ENCODE measurements at regions of chr5 and their contacts with region 1.

Region 1: DNA sequence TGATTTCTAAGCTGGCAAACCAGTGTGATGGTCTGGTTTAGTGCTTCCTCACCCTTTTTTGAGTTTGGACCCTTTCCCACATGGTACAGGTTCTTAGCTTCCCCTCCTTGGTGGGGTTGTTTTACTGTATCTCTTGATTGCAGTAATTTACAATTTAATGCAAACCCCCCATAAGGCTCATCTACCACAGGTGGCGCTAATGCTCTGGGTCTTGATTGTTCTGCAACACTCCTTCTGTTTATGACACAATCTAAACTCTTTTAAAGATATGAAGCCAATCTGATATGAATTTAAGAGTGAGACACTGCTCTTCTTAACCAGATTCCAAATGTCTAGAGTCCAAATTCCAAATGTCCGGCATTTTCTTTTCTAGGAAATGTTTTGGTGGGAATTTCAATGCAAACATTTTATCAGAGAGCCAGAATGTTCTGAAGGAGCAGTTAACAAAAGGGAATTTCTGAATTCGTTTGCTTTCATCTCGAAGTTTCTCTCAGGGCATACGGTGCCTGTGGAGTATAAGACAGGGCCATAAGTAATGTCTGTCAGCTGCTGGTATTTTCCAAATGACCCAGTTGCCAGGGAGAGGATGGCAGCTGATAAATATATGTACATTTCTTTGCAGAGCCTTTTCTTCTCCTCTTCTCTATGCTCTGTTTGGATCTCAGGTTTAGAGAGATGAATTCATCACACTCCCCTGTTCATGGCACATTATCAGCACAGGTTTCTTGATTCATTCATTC is 246.8 kb downstream of the ARHGAP26 start:
- DNase-seq: peak; percentile 85
- H3K4me3 Mint-ChIP-seq: no peak overlapping the region
- H3K27ac Mint-ChIP-seq: no peak overlapping the region
- H3K4me1 Mint-ChIP-seq: peaks cover under 1% of the 10 kb centered on the region
- H3K27me3 Mint-ChIP-seq: no peaks in the 10 kb centered on the region
- CTCF ChIP-seq: peak; percentile 83

Region 2: DNA sequence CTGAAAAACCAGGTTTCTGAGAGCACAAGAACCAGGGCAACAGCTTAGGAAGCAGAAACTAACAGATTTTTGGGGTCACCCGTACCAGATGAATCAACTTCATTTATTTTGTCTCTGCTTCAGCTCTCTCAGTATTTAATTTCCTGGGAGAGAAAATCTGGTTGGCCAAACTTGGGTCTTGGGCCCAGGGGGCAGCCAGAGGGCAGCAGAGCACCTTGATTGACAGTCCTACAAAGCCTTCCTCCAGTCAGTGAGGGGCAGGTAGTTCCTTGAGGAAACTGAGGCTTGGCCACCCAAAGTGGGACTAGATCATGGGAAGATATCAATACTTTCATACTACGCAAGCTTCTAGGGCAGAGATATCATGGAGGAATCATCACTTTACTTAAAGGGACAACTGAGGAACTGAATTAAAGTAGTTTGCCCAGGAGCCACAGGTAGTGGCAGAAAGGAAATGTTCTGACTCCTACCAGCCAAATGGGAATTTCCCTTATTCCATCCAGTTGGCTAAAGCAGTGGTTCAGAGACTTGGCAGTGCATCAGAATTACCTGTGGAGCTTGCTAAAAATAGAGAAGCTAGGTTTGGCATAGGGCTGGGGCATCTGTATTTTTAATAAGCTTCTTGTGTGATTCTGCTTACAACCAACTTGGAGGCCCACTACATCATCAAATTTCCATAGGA is 268.2 kb before region 1 on chr5:
- CTCF ChIA-PET with region 1: no interaction called
- POLR2A ChIA-PET with region 1: no interaction called
- intact Hi-C with region 1: no loop called
- DNase-seq: peak; percentile 84
- H3K4me3 Mint-ChIP-seq: no peak overlapping the region
- H3K27ac Mint-ChIP-seq: peak overlapping the region; percentile 20
- H3K4me1 Mint-ChIP-seq: peaks cover 44% of the 10 kb centered on the region
- H3K27me3 Mint-ChIP-seq: no peaks in the 10 kb centered on the region
- CTCF ChIP-seq: peak; percentile 87

Region 3: DNA sequence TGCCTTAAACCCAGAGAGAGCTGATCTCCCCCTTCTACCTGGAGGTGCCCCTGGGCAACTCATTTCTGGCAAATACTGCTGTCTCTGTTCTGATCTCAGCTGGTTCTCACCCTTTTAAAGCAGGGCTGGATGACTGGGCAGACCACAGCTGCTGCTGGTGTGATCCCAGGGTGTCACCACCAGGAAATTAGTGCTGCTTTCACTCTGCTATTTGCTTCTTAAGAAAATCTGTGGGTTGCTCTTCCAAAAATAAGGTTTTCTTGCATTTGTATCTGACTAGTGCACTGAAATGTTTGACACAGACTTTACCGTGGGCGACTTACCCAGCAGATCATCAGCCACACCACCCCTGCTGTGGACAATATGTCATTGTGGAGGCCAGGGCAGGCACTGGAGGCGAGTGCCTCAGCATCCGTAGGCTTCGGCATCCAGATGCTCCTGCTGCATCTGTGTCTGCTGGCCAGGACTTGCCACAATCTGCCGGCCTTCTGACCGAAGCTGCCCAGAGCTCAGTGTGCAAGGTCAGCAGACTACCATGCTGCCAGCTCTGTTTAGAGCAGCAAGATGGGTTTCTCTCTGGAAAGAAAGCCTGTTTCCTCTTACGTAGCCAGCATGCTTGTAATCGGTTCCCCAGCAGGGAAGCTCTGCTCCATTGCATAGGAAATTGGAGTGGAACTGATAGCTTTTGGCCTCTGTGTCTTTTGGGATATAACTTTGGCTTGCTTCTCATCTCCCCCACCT is 233.2 kb before region 1 on chr5:
- CTCF ChIA-PET with region 1: no interaction called
- POLR2A ChIA-PET with region 1: no interaction called
- intact Hi-C with region 1: no loop called
- DNase-seq: no peak
- H3K4me3 Mint-ChIP-seq: no peak overlapping the region
- H3K27ac Mint-ChIP-seq: no peak overlapping the region
- H3K4me1 Mint-ChIP-seq: peaks cover 20% of the 10 kb centered on the region
- H3K27me3 Mint-ChIP-seq: no peaks in the 10 kb centered on the region
- CTCF ChIP-seq: no peak

Region 4: DNA sequence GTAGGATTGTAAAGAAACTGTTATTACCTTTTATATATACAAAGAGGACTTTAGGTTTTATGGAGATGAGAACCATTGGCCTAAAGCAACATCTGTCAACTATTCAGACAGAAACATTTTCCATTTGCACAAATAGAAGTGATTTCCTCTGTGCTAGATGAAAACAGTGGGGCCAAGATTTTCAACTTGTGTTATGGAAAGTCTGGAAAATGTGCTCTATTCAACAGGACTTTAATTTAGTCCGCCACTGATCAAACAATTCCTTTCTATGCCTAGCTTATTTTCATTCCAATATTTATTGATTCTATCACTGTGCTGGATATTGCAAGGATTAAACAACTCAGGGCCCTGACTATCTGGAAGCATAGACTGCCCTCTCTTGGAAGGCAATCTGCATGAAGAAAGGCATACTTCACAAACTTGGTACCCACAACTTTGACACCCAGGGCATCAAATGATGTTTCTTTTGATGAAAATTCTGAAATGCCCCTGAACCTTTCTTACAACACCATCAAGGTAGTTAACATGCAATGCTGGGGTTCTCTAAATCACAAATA is 668.4 kb after region 1 on chr5:
- CTCF ChIA-PET with region 1: interaction called, 3 read pairs
- POLR2A ChIA-PET with region 1: no interaction called
- intact Hi-C with region 1: loop called (anchors 5 kb)
- DNase-seq: peak; percentile 49
- H3K4me3 Mint-ChIP-seq: no peak overlapping the region
- H3K27ac Mint-ChIP-seq: no peak overlapping the region
- H3K4me1 Mint-ChIP-seq: no peaks in the 10 kb centered on the region
- H3K27me3 Mint-ChIP-seq: no peaks in the 10 kb centered on the region
- CTCF ChIP-seq: peak; percentile 51

Measured in MCF 10A (cell line).